Pancreas (tissue), 10 donors: ENCODE measurements at regions of chr2 and their contacts with region 1.

Region 1: GRCh38 chr2:59190518-59190917 is 949.4 kb upstream of the FANCL start:
- DNase-seq: no peak
- ATAC-seq: no peak
- H3K4me3 ChIP-seq: no peak overlapping the region
- H3K27ac ChIP-seq: no peak overlapping the region
- H3K4me1 ChIP-seq: no peaks in the 10 kb centered on the region
- H3K27me3 ChIP-seq: no peaks in the 10 kb centered on the region
- CTCF ChIP-seq: no peak

Region 2: GRCh38 chr2:58594175-58594574 is 596.3 kb before region 1 on chr2:
- intact Hi-C with region 1: loop called in 1 of 3 experiments (anchors 5 kb)
- DNase-seq: no peak
- ATAC-seq: no peak
- H3K4me3 ChIP-seq: no peak overlapping the region
- H3K27ac ChIP-seq: no peak overlapping the region
- H3K4me1 ChIP-seq: no peaks in the 10 kb centered on the region
- H3K27me3 ChIP-seq: no peaks in the 10 kb centered on the region
- CTCF ChIP-seq: no peak

Region 3: GRCh38 chr2:59339121-59339836 is 148.8 kb after region 1 on chr2:
- intact Hi-C with region 1: no loop called
- DNase-seq: no peak
- ATAC-seq: no peak
- H3K4me3 ChIP-seq: no peak overlapping the region
- H3K27ac ChIP-seq: no peak overlapping the region
- H3K4me1 ChIP-seq: no peaks in the 10 kb centered on the region
- H3K27me3 ChIP-seq: no peaks in the 10 kb centered on the region
- CTCF ChIP-seq: no peak